Sigmoid colon (tissue), 7 donors: ENCODE measurements at regions of chr6 and their contacts with region 1.

Region 1: GRCh38 chr6:93784794-93785693 is 365.7 kb upstream of the EPHA7 start:
- DNase-seq: no peak
- H3K4me3 ChIP-seq: peak overlapping the region; percentile 6 to 42 (median 38)
- H3K27ac ChIP-seq: peak overlapping the region in 3 of 4 donors; percentile 65 to 76 (median 68)
- H3K4me1 ChIP-seq: peaks cover 0 to 23% (median 9%) of the 10 kb centered on the region in 4 donors
- H3K27me3 ChIP-seq: no peaks in the 10 kb centered on the region
- CTCF ChIP-seq: no peak
- EP300 ChIP-seq: no peak
- POLR2A ChIP-seq: no peak

Region 2: GRCh38 chr6:93575495-93576267 is 209.4 kb before region 1 on chr6:
- intact Hi-C with region 1: loop called (anchors 10 kb)
- DNase-seq: no peak
- H3K4me3 ChIP-seq: no peak overlapping the region
- H3K27ac ChIP-seq: peak overlapping the region in 2 of 4 donors; percentile 4 to 86
- H3K4me1 ChIP-seq: peaks cover 0 to 66% (median 20%) of the 10 kb centered on the region in 4 donors
- H3K27me3 ChIP-seq: no peaks in the 10 kb centered on the region
- CTCF ChIP-seq: no peak
- EP300 ChIP-seq: no peak
- POLR2A ChIP-seq: no peak

Region 3: DNA sequence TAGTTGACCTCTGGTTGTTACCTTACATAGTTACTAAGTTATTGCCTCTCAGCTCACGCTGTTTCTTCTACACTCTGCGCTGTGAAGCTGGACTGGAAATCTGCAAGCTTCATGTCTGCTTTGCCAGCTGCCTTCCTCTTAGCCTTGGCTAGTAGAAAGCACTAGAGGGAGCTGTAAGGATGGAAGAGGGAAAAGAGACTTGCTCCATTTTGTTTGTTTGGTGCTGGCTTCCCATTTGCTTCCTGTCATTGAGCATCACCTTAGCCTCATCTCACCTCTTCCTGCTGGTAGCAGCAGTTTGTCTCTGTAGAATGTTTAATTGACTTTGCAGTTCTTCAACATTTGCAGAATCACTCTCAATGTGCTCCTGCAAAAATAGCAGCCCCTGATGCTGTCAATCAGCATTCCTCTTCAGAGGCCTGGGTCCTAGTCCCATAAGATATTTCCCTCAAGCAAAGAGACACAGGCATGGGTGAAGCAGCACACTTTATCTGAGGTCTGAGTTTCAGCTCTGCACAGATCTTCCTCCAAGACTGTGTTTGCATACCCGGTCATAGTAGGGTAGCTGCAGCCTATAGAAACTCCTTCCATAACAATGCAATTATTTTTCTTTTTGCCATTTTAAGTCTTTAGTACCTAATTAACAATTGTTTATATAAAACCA is 63.5 kb before region 1 on chr6:
- intact Hi-C with region 1: no loop called
- DNase-seq: no peak
- H3K4me3 ChIP-seq: no peak overlapping the region
- H3K27ac ChIP-seq: no peak overlapping the region
- H3K4me1 ChIP-seq: no peaks in the 10 kb centered on the region
- H3K27me3 ChIP-seq: no peaks in the 10 kb centered on the region
- CTCF ChIP-seq: peak in 2 of 4 experiments; percentile 12 to 21
- EP300 ChIP-seq: no peak
- POLR2A ChIP-seq: no peak